AG04449 (cell line): ENCODE measurements at regions of chr6 and their contacts with region 1.

Region 1: DNA sequence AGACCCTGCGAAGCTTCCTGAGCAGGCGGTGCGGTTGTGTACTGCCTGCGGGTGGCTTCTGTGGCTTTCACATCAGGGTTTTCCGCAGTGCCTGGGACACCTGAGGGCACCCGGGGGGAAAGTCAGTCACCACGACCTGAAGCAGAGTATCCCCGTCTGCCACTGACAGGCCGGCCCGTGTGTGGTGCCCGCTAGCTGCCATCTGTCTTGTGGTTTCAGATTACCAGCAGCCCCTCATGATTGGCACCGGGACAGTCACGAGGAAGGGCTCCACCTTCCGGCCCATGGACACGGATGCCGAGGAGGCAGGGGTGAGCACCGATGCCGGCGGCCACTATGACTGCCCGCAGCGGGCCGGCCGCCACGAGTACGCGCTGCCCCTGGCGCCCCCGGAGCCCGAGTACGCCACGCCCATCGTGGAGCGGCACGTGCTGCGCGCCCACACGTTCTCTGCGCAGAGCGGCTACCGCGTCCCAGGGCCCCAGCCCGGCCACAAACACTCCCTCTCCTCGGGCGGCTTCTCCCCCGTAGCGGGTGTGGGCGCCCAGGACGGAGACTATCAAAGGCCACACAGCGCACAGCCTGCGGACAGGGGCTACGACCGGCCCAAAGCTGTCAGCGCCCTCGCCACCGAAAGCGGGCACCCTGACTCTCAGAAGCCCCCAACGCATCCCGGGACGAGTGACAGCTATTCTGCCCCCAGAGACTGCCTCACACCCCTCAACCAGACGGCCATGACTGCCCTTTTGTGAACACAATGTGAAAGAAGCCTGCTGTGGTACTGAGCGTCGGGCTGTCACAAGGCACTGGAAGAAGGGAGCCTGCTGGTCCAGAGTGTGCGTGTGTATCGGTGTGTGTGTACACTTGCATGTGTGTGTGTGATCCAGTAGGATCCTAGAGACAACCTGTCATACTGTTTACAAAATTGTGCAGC is 54.4 kb downstream of the GOPC start:
- DNase-seq: no peak
- H3K4me3 ChIP-seq: peak overlapping the region; percentile 45
- CTCF ChIP-seq: peak; percentile 15

Region 2: DNA sequence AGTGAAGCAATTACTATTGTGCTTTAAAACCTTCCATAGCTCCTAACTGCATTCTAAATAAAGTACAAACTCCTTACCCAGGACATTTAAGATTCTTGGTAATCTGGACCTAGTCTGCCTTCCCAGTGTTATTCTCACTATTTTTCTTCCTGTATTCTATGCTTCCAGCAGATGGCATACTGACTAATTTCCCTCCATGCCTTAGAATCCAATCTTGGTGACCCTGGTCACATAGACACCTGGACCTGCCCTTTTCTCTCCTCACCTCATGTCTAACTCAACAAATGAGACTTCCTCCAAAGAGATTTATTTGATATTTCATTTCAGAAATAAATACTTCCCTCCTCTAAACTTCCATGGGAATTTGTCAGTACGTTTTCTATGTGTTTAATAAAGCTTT is 148.0 kb before region 1 on chr6:
- CTCF ChIA-PET with region 1: interaction called, 16 read pairs
- POLR2A ChIA-PET with region 1: no interaction called
- DNase-seq: no peak
- H3K4me3 ChIP-seq: no peak overlapping the region
- CTCF ChIP-seq: peak; percentile 10